Dorsolateral prefrontal cortex (tissue), 120 donors: ENCODE measurements at regions of chr19 and their contacts with region 1.

Region 1: DNA sequence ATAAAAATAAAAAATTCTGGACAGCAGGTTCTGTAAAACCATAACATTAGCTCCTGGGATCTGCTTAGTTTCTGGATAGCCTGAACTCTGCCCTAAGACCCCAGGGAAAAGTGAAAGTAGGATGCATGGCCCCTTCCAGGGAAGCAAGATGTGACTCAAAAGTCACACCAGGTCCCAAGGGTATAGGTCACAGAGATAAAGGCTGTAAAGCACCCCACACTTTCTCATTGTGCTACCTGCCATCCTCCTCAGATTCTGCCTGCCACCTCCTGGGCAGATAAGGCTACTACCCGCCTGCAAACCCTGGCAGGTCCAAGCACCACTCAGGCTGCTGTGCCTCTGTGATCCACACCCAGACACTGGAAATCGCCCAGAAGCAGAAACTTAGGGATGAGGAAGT is 20.6 kb downstream of the FFAR2 start:
- DNase-seq: peak in 4 of 10 donors; percentile 16 to 57 (median 39)
- H3K4me3 ChIP-seq: no peak overlapping the region
- H3K27ac ChIP-seq: no peak overlapping the region
- H3K27me3 ChIP-seq: no peaks in the 10 kb centered on the region
- CTCF ChIP-seq: peak in 54 of 56 donors; percentile 21 to 74 (median 52)

Region 2: GRCh38 chr19:34881982-34882381 is 586.7 kb before region 1 on chr19:
- intact Hi-C with region 1: no loop called
- DNase-seq: no peak
- H3K4me3 ChIP-seq: no peak overlapping the region
- H3K27ac ChIP-seq: no peak overlapping the region
- H3K27me3 ChIP-seq: no peaks in the 10 kb centered on the region
- CTCF ChIP-seq: no peak

Region 3: GRCh38 chr19:35352448-35353304 is 116.0 kb before region 1 on chr19:
- intact Hi-C with region 1: loop called (anchors 10 kb)
- DNase-seq: peak; percentile 46 to 80 (median 68)
- H3K4me3 ChIP-seq: no peak overlapping the region
- H3K27ac ChIP-seq: peak overlapping the region in 13 of 59 donors; percentile 1 to 73 (median 38)
- H3K27me3 ChIP-seq: peaks cover 0 to 5% (median 0%) of the 10 kb centered on the region in 45 donors
- CTCF ChIP-seq: peak; percentile 46 to 93 (median 83)

Region 4: GRCh38 chr19:35421362-35421761 is 47.3 kb before region 1 on chr19:
- intact Hi-C with region 1: loop called in 1 of 2 experiments (anchors 5 kb)
- DNase-seq: no peak
- H3K4me3 ChIP-seq: no peak overlapping the region
- H3K27ac ChIP-seq: no peak overlapping the region
- H3K27me3 ChIP-seq: peaks cover 0 to 8% (median 0%) of the 10 kb centered on the region in 45 donors
- CTCF ChIP-seq: no peak